GM10248 (cell line): ENCODE measurements at regions of chr2 and their contacts with region 1.

Region 1: GRCh38 chr2:141911485-141912066 is 219.2 kb downstream of the LRP1B start:
- DNase-seq: peak; percentile 2
- CTCF ChIP-seq: peak; percentile 42

Region 2: GRCh38 chr2:141923657-141924056 is 12.1 kb after region 1 on chr2:
- CTCF ChIA-PET with region 1: interaction called, 14 read pairs
- POLR2A ChIA-PET with region 1: no interaction called
- DNase-seq: no peak
- CTCF ChIP-seq: no peak